GM10248 (cell line): ENCODE measurements at regions of chr6 and their contacts with region 1.

Region 1: DNA sequence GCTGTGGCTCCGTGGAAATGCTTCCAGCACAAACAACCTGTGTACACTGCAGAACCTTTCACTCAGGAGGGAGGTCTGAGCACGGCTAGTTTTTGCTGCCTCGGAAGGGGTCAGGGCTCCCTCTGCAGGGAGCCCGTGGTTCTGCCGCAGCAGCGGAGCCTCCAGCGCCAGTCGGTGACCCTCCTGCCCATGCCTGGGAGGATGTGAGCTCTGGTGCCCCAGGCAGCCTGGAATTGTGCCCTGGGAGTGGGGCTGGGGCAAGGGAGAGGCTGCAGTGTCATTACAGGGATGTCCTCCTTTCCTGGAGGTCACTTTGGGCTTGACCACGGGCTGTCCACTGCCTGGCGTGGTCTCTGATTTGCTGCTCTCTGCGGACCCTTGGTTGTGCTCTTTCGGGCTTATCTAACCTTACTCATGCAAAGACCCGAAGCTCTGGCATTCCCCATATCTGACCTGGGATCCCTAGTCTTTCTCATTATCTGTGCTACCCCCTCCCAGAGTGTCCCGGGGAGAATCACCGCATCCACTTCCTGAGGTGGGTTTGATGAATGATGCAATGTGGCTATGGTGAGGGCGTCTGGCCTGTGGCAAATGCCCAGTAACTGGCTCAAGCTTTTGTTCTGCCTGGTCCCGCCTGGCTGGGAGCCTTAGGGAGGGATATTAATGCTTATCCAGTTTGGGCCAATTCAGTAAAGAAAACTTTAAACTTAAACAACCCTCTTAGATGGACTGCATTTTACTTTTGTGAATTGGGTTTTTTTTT is 59.6 kb upstream of the TAGAP start:
- DNase-seq: peak; percentile 85
- CTCF ChIP-seq: peak; percentile 88

Region 2: GRCh38 chr6:158999666-159000403 is 104.5 kb before region 1 on chr6 and contains the start of gene RSPH3:
- CTCF ChIA-PET with region 1: interaction called, 208 read pairs
- POLR2A ChIA-PET with region 1: no interaction called
- DNase-seq: peak; percentile 98
- CTCF ChIP-seq: peak; percentile 13

Region 3: GRCh38 chr6:159017757-159018559 is 86.4 kb before region 1 on chr6:
- CTCF ChIA-PET with region 1: interaction called, 26 read pairs
- POLR2A ChIA-PET with region 1: no interaction called
- DNase-seq: peak; percentile 45
- CTCF ChIP-seq: no peak

Region 4: DNA sequence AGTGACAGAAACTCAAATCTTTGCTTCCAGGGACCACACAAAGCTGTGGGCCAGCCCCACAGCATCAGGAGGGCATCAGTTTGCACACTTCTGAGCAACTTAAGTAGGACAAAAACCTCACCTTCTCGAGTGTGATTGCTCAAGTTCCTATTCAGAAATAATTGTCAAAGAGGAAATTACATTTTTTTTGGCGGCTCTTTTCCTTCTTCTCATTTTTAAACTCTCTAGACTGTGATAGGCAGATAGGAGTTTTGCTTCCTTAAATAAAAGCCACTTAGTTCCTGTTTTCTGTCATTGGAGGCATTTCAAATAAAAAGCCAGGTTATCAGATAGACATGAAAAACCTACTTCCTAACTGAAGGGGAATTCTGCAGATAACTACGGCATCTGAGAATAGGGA is 48.3 kb before region 1 on chr6:
- CTCF ChIA-PET with region 1: interaction called, 19 read pairs
- POLR2A ChIA-PET with region 1: no interaction called
- DNase-seq: no peak
- CTCF ChIP-seq: no peak

Region 5: GRCh38 chr6:159080217-159080976 is 23.9 kb before region 1 on chr6:
- CTCF ChIA-PET with region 1: interaction called, 22 read pairs
- POLR2A ChIA-PET with region 1: interaction called, 3 read pairs
- DNase-seq: no peak
- CTCF ChIP-seq: no peak

Region 6: DNA sequence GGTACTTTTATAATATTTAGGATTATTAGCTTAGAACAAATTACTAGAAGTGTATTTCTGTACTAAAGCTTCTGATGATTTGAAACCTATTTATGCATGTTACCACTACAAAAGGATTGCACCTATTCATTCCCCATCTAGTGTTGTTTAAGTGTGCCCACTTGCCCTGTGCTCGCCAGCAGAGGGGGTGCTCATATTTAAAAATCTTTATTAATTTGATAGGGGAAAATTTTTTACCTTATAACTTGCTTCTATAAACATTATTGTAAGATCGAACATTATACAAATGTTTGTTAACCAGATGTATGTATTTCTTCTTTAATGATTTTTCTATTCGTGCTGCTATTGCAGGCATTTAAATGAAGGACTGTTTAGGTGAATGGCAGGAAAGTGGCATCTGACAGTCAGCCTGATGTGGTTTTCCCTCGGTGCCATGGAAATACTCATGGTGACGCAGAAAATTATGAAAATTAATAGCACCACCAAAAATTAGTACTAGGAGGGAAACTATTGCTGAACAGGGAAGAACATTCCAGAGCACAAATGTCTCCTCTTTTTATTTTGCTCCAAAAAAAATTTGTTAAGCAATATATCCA is 20.8 kb after region 1 on chr6:
- CTCF ChIA-PET with region 1: interaction called, 41 read pairs
- POLR2A ChIA-PET with region 1: no interaction called
- DNase-seq: no peak
- CTCF ChIP-seq: no peak